Right lobe of liver (tissue), 6 donors: ENCODE measurements at regions of chr6 and their contacts with region 1.

Region 1: DNA sequence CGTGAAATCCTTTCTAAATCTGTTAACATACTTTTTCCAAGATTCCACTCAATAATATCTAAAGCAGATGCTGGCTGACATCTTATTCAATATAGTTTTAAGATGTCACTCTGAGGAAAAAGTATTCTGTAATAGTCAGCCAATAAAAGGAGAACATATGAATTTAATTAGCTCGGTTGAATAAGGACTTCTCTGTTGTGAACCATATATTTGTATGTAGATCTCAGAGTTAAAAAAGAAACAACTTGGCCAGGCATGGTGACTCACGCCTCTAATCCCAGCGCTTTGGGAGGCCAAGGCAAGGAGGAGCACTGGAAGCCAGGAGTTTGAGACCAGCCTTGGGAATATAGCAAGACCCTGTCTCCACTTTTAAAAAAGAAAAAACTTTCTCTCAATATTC is 7.4 kb upstream of the CD24 start:
- DNase-seq: no peak
- ATAC-seq: no peak
- H3K4me3 ChIP-seq: no peak overlapping the region
- H3K27ac ChIP-seq: no peak overlapping the region
- H3K4me1 ChIP-seq: no peaks in the 10 kb centered on the region
- H3K27me3 ChIP-seq: no peaks in the 10 kb centered on the region
- CTCF ChIP-seq: no peak
- POLR2A ChIP-seq: no peak

Region 2: GRCh38 chr6:106608062-106608668 is 373.8 kb before region 1 on chr6:
- intact Hi-C with region 1: loop called in 1 of 2 experiments (anchors 10 kb)
- DNase-seq: no peak
- ATAC-seq: peak; percentile 96 to 98 (median 98)
- H3K4me3 ChIP-seq: no peak overlapping the region
- H3K27ac ChIP-seq: no peak overlapping the region
- H3K4me1 ChIP-seq: no peaks in the 10 kb centered on the region
- H3K27me3 ChIP-seq: no peaks in the 10 kb centered on the region
- CTCF ChIP-seq: peak; percentile 67 to 74 (median 70)
- POLR2A ChIP-seq: no peak

Region 3: DNA sequence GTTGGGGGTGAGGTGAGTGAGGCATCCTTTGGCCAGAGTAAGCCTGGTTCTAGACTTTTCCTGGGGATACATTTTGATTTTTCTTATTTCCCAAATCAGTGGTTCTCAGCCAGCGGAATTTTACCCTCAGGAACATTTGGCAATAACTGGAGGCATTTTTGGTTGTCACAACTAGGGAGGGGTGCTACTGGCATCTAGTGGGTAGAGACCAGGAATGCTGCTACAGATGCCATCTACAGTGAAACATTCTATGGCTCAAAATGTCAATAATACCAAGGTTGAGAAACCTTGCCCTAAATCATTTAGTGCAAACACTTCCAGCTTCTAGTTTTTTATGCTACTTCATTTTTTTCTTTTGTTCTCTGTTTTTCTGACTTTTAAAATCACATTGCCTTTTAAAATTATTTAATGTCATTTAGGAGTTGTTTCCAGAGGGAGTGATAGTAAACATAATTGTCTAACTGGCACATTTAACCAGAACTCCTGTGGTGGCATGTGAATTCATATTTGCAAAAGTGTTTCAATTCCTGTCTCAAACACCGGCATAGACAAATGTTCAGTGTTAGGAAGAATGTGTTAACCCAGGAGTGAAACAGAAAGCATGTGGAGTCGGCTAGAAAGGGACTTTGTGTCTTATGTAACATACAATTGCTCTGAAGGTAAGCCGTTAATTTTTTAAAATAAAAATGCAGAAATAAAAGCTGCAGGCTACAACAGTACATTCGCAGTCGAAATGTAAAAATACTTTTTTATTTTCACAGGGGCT is 293.6 kb before region 1 on chr6:
- intact Hi-C with region 1: loop called in 1 of 2 experiments (anchors 10 kb)
- DNase-seq: peak in 1 of 3 donors; percentile 61
- ATAC-seq: peak; percentile 75 to 86 (median 84)
- H3K4me3 ChIP-seq: peak overlapping the region; percentile 2 to 25 (median 17)
- H3K27ac ChIP-seq: peak overlapping the region; percentile 47 to 57 (median 54)
- H3K4me1 ChIP-seq: peaks cover 0 to 21% (median 7%) of the 10 kb centered on the region in 4 donors
- H3K27me3 ChIP-seq: no peaks in the 10 kb centered on the region
- CTCF ChIP-seq: peak; percentile 37 to 53 (median 48)
- POLR2A ChIP-seq: no peak

Region 4: GRCh38 chr6:107237992-107238660 is 256.2 kb after region 1 on chr6:
- intact Hi-C with region 1: no loop called
- DNase-seq: no peak
- ATAC-seq: no peak
- H3K4me3 ChIP-seq: no peak overlapping the region
- H3K27ac ChIP-seq: no peak overlapping the region
- H3K4me1 ChIP-seq: peaks cover 0 to 23% (median 0%) of the 10 kb centered on the region in 4 donors
- H3K27me3 ChIP-seq: no peaks in the 10 kb centered on the region
- CTCF ChIP-seq: no peak
- POLR2A ChIP-seq: no peak